ENCODE measurements at regions of chr14 and their contacts with region 1.

Region 1: GRCh38 chr14:21917699-21918436 is 244.2 kb upstream of the OR4E1 start:
- DNase-seq: peak; percentile 48
- H3K4me3 Mint-ChIP-seq: peak overlapping the region; percentile 75
- H3K27ac Mint-ChIP-seq: peak overlapping the region; percentile 49
- H3K4me1 Mint-ChIP-seq: peaks cover 62% of the 10 kb centered on the region
- H3K27me3 Mint-ChIP-seq: no peaks in the 10 kb centered on the region

Region 2: DNA sequence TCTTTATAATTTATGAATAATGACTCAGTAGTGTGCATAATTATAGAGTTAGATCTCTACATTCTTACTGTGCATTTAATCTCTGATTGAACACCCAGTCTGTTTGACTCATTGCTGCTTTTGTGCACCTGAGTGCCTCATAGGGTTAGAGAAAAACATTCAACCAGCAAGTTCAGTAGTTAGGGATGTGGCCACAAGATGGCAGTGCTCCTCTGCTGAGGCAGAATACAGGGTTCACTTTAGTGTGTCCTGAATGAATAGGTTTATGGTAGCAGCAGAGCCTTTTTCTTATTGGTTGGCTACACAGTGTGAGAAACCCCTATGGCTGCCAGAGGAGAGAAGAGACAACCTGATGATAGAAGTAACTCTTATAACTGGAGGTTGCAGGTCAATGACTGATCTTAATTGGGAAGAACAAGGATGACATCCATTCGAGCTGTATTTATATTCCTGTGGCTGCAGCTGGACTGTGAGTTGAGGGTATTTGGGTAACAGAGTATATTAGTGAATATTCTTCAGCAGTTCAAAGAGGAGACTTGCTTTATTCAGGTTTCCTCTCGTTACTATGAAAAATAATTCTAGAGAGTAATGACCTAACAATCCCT is 49.3 kb before region 1 on chr14:
- intact Hi-C with region 1: loop called (anchors 1 kb)
- DNase-seq: peak; percentile 72
- H3K4me3 Mint-ChIP-seq: peak overlapping the region; percentile 74
- H3K27ac Mint-ChIP-seq: peak overlapping the region; percentile 46
- H3K4me1 Mint-ChIP-seq: peaks cover 23% of the 10 kb centered on the region
- H3K27me3 Mint-ChIP-seq: peaks cover 5% of the 10 kb centered on the region

Region 3: DNA sequence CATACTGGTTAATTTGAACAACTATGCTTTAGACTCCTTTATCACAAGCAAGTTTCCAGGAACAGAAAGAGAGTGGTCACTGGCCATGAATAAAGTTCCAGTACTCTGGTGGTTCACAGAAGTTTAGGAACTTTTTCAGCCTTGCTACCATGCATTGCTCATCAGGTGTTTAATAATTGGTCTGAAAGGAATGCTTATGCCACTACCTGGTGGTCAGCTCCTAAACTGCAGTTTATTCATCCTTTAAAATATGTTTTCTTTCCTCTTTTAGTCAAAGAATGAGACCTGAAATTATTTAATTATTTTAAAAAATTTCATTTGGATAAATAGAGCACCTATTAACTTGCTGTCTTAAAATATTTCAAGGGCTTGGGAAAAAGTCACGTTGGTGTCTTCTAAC is 15.8 kb after region 1 on chr14:
- intact Hi-C with region 1: loop called (anchors 2 kb)
- DNase-seq: no peak
- H3K4me3 Mint-ChIP-seq: no peak overlapping the region
- H3K27ac Mint-ChIP-seq: no peak overlapping the region
- H3K4me1 Mint-ChIP-seq: no peaks in the 10 kb centered on the region
- H3K27me3 Mint-ChIP-seq: peaks cover 6% of the 10 kb centered on the region

Region 4: GRCh38 chr14:21997300-21997699 is 79.4 kb after region 1 on chr14:
- intact Hi-C with region 1: loop called (anchors 5 kb)
- DNase-seq: peak; percentile 42
- H3K4me3 Mint-ChIP-seq: peak overlapping the region; percentile 92
- H3K27ac Mint-ChIP-seq: peak overlapping the region; percentile 88
- H3K4me1 Mint-ChIP-seq: peaks cover 26% of the 10 kb centered on the region
- H3K27me3 Mint-ChIP-seq: no peaks in the 10 kb centered on the region

Region 5: GRCh38 chr14:22099942-22100763 is 182.3 kb after region 1 on chr14:
- intact Hi-C with region 1: loop called (anchors 5 kb)
- DNase-seq: peak; percentile 39
- H3K4me3 Mint-ChIP-seq: no peak overlapping the region
- H3K27ac Mint-ChIP-seq: peak overlapping the region; percentile 12
- H3K4me1 Mint-ChIP-seq: peaks cover 53% of the 10 kb centered on the region
- H3K27me3 Mint-ChIP-seq: no peaks in the 10 kb centered on the region

Region 6: DNA sequence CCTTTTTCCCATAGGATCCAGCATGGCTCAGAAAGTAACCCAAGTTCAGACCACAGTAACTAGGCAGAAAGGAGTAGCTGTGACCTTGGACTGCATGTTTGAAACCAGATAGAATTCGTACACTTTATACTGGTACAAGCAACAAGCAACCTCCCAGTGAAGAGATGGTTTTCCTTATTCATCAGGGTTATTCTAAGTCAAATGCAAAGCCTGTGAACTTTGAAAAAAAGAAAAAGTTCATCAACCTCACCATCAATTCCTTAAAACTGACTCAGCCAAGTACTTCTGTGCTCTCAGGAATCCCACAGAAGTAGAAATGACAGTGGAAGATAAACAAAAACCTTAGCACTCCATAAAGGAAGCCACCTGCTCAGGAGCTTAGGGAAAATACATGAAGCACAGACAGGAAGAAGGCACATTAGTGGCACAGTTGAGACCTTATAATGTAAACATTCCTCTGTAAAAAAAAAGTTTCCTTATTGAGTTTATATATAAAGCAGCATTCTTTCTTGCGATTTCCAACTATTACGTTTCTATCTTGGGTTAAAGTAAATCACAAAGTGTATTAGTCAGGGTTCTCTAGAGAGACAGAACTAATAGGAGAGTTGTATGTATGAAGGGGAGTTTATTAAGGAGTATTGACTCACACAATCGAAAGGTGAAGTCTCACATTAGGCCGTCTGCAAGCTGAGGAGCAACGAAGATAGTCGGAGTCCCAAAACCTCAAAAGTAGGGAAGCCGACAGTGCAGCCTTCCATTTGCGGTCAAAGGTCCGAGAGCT is 272.7 kb after region 1 on chr14:
- intact Hi-C with region 1: no loop called
- DNase-seq: no peak
- H3K4me3 Mint-ChIP-seq: no peak overlapping the region
- H3K27ac Mint-ChIP-seq: no peak overlapping the region
- H3K4me1 Mint-ChIP-seq: no peaks in the 10 kb centered on the region
- H3K27me3 Mint-ChIP-seq: no peaks in the 10 kb centered on the region

Region 7: GRCh38 chr14:22653012-22653621 is 735.2 kb after region 1 on chr14:
- intact Hi-C with region 1: loop called (anchors 5 kb)
- DNase-seq: peak; percentile 25
- H3K4me3 Mint-ChIP-seq: no peak overlapping the region
- H3K27ac Mint-ChIP-seq: no peak overlapping the region
- H3K4me1 Mint-ChIP-seq: no peaks in the 10 kb centered on the region
- H3K27me3 Mint-ChIP-seq: no peaks in the 10 kb centered on the region

Region 8: DNA sequence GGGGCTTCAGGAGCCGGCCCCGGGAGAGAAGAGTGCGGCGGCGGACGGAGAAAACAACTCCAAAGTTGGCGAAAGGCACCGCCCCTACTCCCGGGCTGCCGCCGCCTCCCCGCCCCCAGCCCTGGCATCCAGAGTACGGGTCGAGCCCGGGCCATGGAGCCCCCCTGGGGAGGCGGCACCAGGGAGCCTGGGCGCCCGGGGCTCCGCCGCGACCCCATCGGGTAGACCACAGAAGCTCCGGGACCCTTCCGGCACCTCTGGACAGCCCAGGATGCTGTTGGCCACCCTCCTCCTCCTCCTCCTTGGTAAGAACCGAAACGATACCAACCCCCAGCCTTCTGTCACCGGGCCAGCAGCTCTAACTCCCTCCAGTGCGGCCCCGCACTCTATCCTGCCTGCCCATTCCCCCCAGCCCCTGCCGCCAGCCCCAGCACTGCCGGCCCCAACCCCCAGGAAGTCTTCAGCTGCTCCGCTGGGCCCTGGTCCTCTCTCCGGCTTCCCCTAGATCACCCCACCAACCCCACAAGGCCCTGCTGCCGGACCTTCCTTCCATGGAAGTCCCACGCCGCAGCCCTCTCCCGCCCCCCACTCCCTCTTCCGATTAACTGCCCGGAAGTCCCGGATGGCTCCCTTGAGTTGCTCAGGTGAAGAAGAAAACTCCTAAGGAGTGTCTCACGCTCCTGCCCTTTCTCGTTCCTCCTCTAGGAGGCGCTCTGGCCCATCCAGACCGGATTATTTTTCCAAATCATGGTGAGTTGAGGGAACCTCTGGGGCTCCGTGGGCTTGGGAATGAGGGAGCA is 954.4 kb after region 1 on chr14:
- intact Hi-C with region 1: loop called (anchors 5 kb)
- DNase-seq: peak; percentile 63
- H3K4me3 Mint-ChIP-seq: peak overlapping the region; percentile 91
- H3K27ac Mint-ChIP-seq: peak overlapping the region; percentile 80
- H3K4me1 Mint-ChIP-seq: peaks cover 22% of the 10 kb centered on the region
- H3K27me3 Mint-ChIP-seq: no peaks in the 10 kb centered on the region

Measured in activated T-helper 1 cell treated with anti-CD3 and anti-CD28 coated beads, Interleukin-12 subunit alpha, Interleukin-12 subunit beta, Interleukin-2, Interleukin-4 antibody, amounts not matched to agents 30 ng/mL and 10 ng/mL and 1 ng/mL, durations not matched to agents 14 hours and 24 hours and 36 hours (primary cell).